Uterus (tissue), 4 donors: ENCODE measurements at regions of chr6 and their contacts with region 1.

Region 1: GRCh38 chr6:168370310-168370991 is 50.9 kb upstream of the DACT2 start:
- DNase-seq: peak; percentile 84 to 88
- H3K4me3 ChIP-seq: no peak overlapping the region
- H3K27ac ChIP-seq: peak overlapping the region in 1 of 2 donors; percentile 7
- H3K4me1 ChIP-seq: peaks cover 4 to 6% of the 10 kb centered on the region in 2 donors
- H3K27me3 ChIP-seq: no peaks in the 10 kb centered on the region
- CTCF ChIP-seq: peak; percentile 90 to 95 (median 94)
- POLR2A ChIP-seq: no peak

Region 2: DNA sequence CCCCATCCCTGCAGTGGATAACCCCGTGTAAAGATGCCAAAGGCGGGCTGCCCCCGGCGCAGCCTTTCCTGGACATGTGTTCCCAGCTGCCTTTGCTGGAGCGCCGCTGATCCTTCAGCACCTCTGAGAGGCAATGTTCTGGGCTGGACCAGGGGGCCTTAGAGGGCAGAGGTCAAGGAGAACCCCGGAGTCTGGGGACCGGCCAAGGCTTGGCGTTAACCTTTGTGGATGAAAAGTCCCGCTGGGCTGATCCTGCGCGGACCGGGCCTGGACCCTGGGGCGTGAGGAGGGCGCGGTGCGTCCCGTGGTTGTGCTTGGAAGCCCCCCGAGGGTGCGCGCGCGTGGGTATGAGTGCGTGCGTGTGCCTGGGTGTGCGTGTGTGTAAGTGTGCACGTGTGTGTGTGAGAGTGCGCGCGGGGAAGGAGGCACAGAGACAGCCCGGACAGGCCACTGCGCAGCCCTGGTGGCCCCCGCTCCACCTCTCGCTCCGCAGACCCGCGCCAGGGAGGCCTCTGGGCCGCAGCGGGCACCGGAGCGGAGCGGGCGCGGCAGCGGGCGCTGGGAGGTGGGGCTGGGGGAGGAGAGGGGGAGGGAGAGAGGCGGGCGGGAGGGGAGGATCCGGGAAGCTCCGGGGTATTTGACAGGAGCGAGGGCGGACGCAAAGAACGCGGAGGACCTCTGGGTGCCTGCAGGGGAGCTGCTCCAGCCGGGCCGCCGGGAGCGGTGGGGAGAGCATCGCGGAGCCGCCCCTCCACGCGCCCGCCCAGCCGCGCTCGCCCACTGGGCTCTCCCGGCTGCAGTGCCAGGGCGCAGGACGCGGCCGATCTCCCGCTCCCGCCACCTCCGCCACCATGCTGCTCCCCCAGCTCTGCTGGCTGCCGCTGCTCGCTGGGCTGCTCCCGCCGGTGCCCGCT is 70.3 kb after region 1 on chr6 and contains the start of gene SMOC2:
- intact Hi-C with region 1: loop called (anchors 10 kb)
- DNase-seq: peak; percentile 66 to 79
- H3K4me3 ChIP-seq: peak within 1 kb of the TSS; percentile 42 to 62
- H3K27ac ChIP-seq: peak within 1 kb of the TSS; percentile 78 to 85
- H3K4me1 ChIP-seq: no peaks in the 10 kb centered on the region
- H3K27me3 ChIP-seq: no peaks in the 10 kb centered on the region
- CTCF ChIP-seq: peak in 2 of 4 experiments; percentile 13 to 18
- POLR2A ChIP-seq: no peak
- total RNA-seq, gene SMOC2: 98.2 to 139 (median 121) TPM

Region 3: DNA sequence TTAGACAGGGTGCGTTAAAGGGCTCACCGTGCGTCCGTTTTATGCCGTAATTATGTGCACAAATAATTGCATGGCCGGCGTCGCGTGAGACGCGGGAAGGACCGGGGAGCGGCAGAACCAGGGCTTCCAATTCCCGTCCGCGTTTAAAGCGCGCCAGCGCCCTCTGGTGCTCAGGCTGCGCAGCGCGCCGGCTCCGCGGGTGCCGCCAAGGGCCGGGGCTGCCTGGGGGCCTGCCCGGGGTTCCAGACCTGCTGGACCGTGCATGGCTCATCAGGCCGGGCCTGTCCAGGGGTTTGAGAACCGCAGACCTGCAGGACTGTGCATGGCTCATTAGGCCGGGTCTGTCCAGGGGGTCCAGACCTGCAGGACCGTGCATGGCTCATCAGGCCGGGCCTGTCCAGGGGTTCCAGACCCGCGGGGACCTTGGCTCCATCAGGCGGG is 514.2 kb after region 1 on chr6:
- intact Hi-C with region 1: loop called (anchors 2 kb)
- DNase-seq: peak; percentile 67 to 80
- H3K4me3 ChIP-seq: peak overlapping the region in 1 of 2 donors; percentile 19
- H3K27ac ChIP-seq: no peak overlapping the region
- H3K4me1 ChIP-seq: no peaks in the 10 kb centered on the region
- H3K27me3 ChIP-seq: no peaks in the 10 kb centered on the region
- CTCF ChIP-seq: peak; percentile 89 to 99 (median 92)
- POLR2A ChIP-seq: no peak